Colonic mucosa (tissue), 4 donors: ENCODE measurements at regions of chr19 and their contacts with region 1.

Region 1: GRCh38 chr19:55503502-55504251 is 15.4 kb downstream of the SSC5D start:
- DNase-seq: peak; percentile 86
- H3K4me3 ChIP-seq: peak overlapping the region; percentile 31
- H3K27ac ChIP-seq: peak overlapping the region; percentile 23
- H3K4me1 ChIP-seq: no peaks in the 10 kb centered on the region
- H3K27me3 ChIP-seq: no peaks in the 10 kb centered on the region
- CTCF ChIP-seq: peak; percentile 98

Region 2: DNA sequence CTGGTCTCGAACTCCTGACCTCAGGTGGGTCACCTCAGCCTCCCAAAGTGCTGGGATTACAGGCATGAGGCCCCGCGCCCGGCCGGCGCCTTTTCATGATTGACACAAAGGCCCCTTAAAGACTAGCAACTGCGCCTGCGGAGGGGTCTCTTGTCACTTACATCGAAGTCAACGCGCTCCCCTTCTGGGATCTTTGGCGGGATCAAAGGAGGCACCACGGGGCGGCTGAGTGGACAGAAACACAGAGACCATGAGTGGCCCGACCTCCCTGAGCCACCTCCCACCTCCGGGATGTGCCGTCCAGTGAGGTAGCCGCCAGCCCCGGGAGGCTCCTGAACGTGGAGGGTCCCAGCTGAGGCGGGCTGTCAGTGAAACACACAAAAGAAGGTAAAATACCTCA is 362.0 kb before region 1 on chr19:
- intact Hi-C with region 1: loop called (anchors 2 kb)
- DNase-seq: no peak
- H3K4me3 ChIP-seq: no peak overlapping the region
- H3K27ac ChIP-seq: no peak overlapping the region
- H3K4me1 ChIP-seq: no peaks in the 10 kb centered on the region
- H3K27me3 ChIP-seq: peaks cover 20% of the 10 kb centered on the region
- CTCF ChIP-seq: no peak

Region 3: GRCh38 chr19:55467236-55468053 is 36.2 kb before region 1 on chr19:
- intact Hi-C with region 1: loop called (anchors 5 kb)
- DNase-seq: peak; percentile 62
- H3K4me3 ChIP-seq: no peak overlapping the region
- H3K27ac ChIP-seq: no peak overlapping the region
- H3K4me1 ChIP-seq: no peaks in the 10 kb centered on the region
- H3K27me3 ChIP-seq: no peaks in the 10 kb centered on the region
- CTCF ChIP-seq: peak; percentile 98